ENCODE measurements at regions of chr19 and their contacts with region 1.

Region 1: GRCh38 chr19:11798391-11799330 is at the start of gene ZNF491:
- DNase-seq: peak; percentile 63
- H3K4me3 Mint-ChIP-seq: peak within 1 kb of the TSS; percentile 78
- H3K27ac Mint-ChIP-seq: no peak within 1 kb of the TSS
- H3K4me1 Mint-ChIP-seq: peaks cover 14% of the 10 kb centered on the region
- H3K27me3 Mint-ChIP-seq: no peaks in the 10 kb centered on the region
- total RNA-seq, gene ZNF491: 0.54 and 0.56 TPM in 2 replicates

Region 2: GRCh38 chr19:11766597-11767591 is 31.8 kb before region 1 on chr19 and contains the start of gene ZNF441:
- intact Hi-C with region 1: loop called (anchors 2 kb)
- DNase-seq: peak; percentile 87
- H3K4me3 Mint-ChIP-seq: peak within 1 kb of the TSS; percentile 95
- H3K27ac Mint-ChIP-seq: peak within 1 kb of the TSS; percentile 95
- H3K4me1 Mint-ChIP-seq: peaks cover 11% of the 10 kb centered on the region
- H3K27me3 Mint-ChIP-seq: no peaks in the 10 kb centered on the region
- total RNA-seq, gene ZNF441: 2.8 and 4.4 TPM in 2 replicates

Region 3: GRCh38 chr19:11814029-11814699 is 15.5 kb after region 1 on chr19 and contains the start of gene ZNF440:
- intact Hi-C with region 1: loop called (anchors 1 kb)
- DNase-seq: peak; percentile 84
- H3K4me3 Mint-ChIP-seq: peak within 1 kb of the TSS; percentile 88
- H3K27ac Mint-ChIP-seq: peak within 1 kb of the TSS; percentile 69
- H3K4me1 Mint-ChIP-seq: peaks cover 13% of the 10 kb centered on the region
- H3K27me3 Mint-ChIP-seq: peaks cover 1% of the 10 kb centered on the region
- total RNA-seq, gene ZNF440: 6.7 and 9.2 TPM in 2 replicates

Region 4: DNA sequence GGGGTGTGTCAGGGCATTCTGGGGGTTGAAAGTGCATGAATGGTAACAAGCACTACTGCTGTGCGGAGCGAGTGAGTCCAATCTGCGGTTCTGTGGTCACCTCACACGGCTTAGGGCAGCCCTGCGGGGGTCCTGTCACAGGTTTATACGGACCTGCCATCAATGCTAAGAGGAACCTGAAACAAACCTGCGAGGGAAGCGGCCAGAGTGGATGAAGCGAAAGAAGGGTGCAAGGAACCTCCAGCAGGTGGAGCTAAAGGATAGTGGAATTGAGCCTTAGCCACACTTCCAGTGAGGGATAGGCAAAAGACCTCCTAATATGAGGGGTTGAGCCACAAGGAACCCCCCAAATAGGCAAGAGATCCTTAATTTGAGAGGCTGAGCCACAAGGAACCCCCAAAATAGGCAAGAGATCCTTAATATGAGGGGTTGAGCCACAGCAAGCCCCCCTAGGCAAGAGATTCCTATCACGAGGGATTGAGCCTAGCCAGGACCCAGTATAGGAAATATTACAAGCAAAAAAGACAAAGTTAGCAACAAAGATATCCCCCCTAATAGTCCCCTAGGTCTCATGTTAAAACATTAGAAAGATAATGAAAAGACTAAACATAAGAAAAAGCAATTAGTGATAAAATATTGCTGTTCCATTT is 82.6 kb after region 1 on chr19:
- intact Hi-C with region 1: loop called (anchors 1 kb)
- DNase-seq: peak; percentile 43
- H3K4me3 Mint-ChIP-seq: no peak overlapping the region
- H3K27ac Mint-ChIP-seq: no peak overlapping the region
- H3K4me1 Mint-ChIP-seq: peaks cover 4% of the 10 kb centered on the region
- H3K27me3 Mint-ChIP-seq: no peaks in the 10 kb centered on the region

Region 5: DNA sequence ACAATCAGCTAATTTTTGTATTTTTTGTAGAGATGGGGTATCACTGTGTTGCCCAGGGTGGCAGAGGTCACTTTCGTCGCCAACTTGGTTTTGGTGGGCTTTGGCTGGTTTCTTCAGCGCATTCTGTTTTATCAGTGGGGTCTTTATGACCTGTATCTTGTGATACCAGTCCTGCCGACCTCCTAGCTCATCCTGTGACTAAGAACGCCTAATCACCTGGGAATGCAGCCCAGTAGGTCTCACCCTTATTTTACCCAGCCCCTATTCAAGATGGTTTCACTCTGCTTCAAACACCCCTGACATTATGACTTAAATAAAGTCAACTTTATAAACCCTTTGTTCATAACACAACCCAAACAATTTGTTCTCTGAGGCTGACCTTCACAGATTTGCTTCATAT is 257.1 kb after region 1 on chr19:
- intact Hi-C with region 1: loop called (anchors 1 kb)
- DNase-seq: no peak
- H3K4me3 Mint-ChIP-seq: no peak overlapping the region
- H3K27ac Mint-ChIP-seq: no peak overlapping the region
- H3K4me1 Mint-ChIP-seq: peaks cover 5% of the 10 kb centered on the region
- H3K27me3 Mint-ChIP-seq: peaks cover 3% of the 10 kb centered on the region

Region 6: GRCh38 chr19:12156223-12157058 is 357.8 kb after region 1 on chr19 and contains the start of gene ZNF625:
- intact Hi-C with region 1: loop called (anchors 5 kb)
- DNase-seq: peak; percentile 37
- H3K4me3 Mint-ChIP-seq: peak within 1 kb of the TSS; percentile 90
- H3K27ac Mint-ChIP-seq: peak within 1 kb of the TSS; percentile 65
- H3K4me1 Mint-ChIP-seq: peaks cover 10% of the 10 kb centered on the region
- H3K27me3 Mint-ChIP-seq: peaks cover 4% of the 10 kb centered on the region
- total RNA-seq, gene ZNF625: 2.5 and 2.9 TPM in 2 replicates